Colonic mucosa (tissue), 4 donors: ENCODE measurements at regions of chr5 and their contacts with region 1.

Region 1: DNA sequence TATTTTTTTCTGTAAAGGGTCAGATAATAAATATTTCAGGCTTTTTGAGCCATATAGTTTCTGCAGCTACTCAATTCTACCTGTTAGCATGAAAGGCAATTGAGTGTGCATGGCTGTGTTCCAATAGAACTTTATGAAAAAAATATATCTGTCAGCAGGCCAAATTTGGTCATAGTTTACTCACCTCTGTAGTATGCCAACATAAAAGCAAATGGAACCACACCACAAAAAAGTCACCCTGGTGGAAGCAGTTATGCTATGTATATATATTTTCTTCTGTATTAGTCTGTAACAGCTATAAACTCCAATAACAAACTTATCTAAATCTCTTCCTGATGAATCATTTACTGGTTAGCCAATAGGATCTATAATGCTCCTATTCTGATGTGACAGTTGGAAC is 3.4 kb downstream of the SLC38A9 start:
- DNase-seq: no peak
- H3K4me3 ChIP-seq: no peak overlapping the region
- H3K27ac ChIP-seq: no peak overlapping the region
- H3K4me1 ChIP-seq: no peaks in the 10 kb centered on the region
- H3K27me3 ChIP-seq: no peaks in the 10 kb centered on the region
- CTCF ChIP-seq: no peak

Region 2: GRCh38 chr5:55324815-55325418 is 383.8 kb before region 1 on chr5:
- intact Hi-C with region 1: loop called (anchors 5 kb)
- DNase-seq: no peak
- H3K4me3 ChIP-seq: no peak overlapping the region
- H3K27ac ChIP-seq: no peak overlapping the region
- H3K4me1 ChIP-seq: no peaks in the 10 kb centered on the region
- H3K27me3 ChIP-seq: no peaks in the 10 kb centered on the region
- CTCF ChIP-seq: peak; percentile 47

Region 3: GRCh38 chr5:55534436-55535198 is 174.1 kb before region 1 on chr5 and contains the start of gene PLPP1:
- intact Hi-C with region 1: no loop called
- DNase-seq: peak; percentile 91
- H3K4me3 ChIP-seq: peak within 1 kb of the TSS; percentile 93
- H3K27ac ChIP-seq: peak within 1 kb of the TSS; percentile 98
- H3K4me1 ChIP-seq: no peaks in the 10 kb centered on the region
- H3K27me3 ChIP-seq: no peaks in the 10 kb centered on the region
- CTCF ChIP-seq: no peak
- total RNA-seq, gene PLPP1: 53.0 to 85.7 TPM

Region 4: DNA sequence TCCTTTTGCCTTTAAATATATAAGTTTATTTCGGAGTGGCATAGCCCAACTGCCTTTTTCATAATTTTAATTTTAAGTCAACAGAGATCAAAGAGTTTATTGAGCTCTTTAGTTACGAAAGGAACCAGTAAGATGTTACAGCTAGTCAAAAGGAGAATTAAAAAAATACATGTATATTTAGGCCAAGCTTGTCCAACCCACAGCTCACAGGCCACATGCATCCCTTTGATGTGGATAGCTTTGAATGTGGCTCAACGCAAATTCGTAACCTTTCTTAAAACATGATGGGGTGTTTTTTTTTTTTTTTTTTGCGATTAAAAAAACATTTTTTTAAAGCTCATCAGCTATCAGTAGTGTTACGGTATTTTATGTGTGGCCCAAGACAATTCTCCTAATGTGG is 92.2 kb after region 1 on chr5:
- intact Hi-C with region 1: no loop called
- DNase-seq: no peak
- H3K4me3 ChIP-seq: no peak overlapping the region
- H3K27ac ChIP-seq: no peak overlapping the region
- H3K4me1 ChIP-seq: no peaks in the 10 kb centered on the region
- H3K27me3 ChIP-seq: no peaks in the 10 kb centered on the region
- CTCF ChIP-seq: no peak

Region 5: GRCh38 chr5:55841976-55842375 is 133.2 kb after region 1 on chr5:
- intact Hi-C with region 1: no loop called
- DNase-seq: no peak
- H3K4me3 ChIP-seq: no peak overlapping the region
- H3K27ac ChIP-seq: no peak overlapping the region
- H3K4me1 ChIP-seq: no peaks in the 10 kb centered on the region
- H3K27me3 ChIP-seq: no peaks in the 10 kb centered on the region
- CTCF ChIP-seq: no peak